ENCODE measurements at regions of chr1 and their contacts with region 1.

Region 1: DNA sequence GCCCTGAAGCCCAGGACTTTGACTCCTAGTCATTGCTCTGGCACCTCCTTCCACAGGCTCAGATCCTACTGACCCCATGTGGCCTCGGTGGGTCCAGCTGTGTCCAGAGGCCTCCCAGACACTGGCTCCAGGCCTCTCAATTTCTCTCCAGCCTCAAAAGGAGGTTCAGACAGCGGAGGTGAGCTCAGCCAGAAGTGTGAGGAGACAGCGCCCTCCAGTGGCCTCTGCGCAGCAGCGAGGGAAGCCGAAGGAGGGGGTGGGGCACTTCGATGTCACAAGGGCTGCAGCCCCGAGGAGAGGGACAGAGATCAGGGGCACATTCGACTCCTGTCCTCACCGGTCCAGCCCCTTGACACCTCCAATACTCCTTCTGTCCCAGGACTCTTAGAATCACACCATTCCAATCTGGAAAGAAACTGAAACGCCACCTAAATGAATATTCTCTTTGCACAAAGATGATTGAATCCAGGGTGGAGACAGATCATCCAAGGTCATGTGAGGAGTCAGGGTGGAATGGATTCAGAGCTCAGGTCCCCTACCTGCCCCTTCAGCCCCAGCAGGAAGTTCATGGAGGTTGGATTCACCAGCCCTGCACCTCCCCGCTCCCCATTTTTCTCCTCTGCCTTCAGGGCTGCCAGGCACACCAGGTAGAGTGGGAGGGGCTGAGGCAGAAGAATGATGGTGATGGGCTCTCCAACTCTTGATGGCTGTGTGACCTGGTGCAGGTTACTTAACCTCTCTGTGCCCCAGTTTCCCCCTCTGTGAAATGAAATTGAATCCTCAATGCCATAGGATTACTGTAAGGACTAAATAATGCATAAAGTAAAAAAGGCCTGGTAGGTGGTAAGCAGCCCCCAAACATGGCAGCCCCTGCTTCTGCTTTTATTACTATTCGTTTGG is 34.8 kb upstream of the ZBTB40 start:
- DNase-seq: peak; percentile 51 to 80
- H3K4me3 ChIP-seq: no peak overlapping the region
- H3K27ac ChIP-seq: no peak overlapping the region
- H3K4me1 ChIP-seq: peaks cover 29% of the 10 kb centered on the region
- H3K27me3 ChIP-seq: no peaks in the 10 kb centered on the region
- CTCF ChIP-seq: peak; percentile 92

Region 2: GRCh38 chr1:21368515-21369289 is 1048.1 kb before region 1 on chr1:
- CTCF ChIA-PET with region 1: interaction called, 5 read pairs
- POLR2A ChIA-PET with region 1: no interaction called
- intact Hi-C with region 1: loop called (anchors 5 kb)
- DNase-seq: peak; percentile 43 to 72
- H3K4me3 ChIP-seq: no peak overlapping the region
- H3K27ac ChIP-seq: no peak overlapping the region
- H3K4me1 ChIP-seq: no peaks in the 10 kb centered on the region; the same call in 1 of the 2 replicates
- H3K27me3 ChIP-seq: no peaks in the 10 kb centered on the region
- CTCF ChIP-seq: peak; percentile 96

Region 3: GRCh38 chr1:22025368-22026155 is 391.2 kb before region 1 on chr1:
- CTCF ChIA-PET with region 1: no interaction called
- POLR2A ChIA-PET with region 1: no interaction called
- intact Hi-C with region 1: loop called (anchors 10 kb)
- DNase-seq: peak; percentile 80 to 85
- H3K4me3 ChIP-seq: peak overlapping the region; percentile 87
- H3K27ac ChIP-seq: peak overlapping the region; percentile 87
- H3K4me1 ChIP-seq: peaks cover 4% of the 10 kb centered on the region
- H3K27me3 ChIP-seq: no peaks in the 10 kb centered on the region
- CTCF ChIP-seq: no peak

Region 4: DNA sequence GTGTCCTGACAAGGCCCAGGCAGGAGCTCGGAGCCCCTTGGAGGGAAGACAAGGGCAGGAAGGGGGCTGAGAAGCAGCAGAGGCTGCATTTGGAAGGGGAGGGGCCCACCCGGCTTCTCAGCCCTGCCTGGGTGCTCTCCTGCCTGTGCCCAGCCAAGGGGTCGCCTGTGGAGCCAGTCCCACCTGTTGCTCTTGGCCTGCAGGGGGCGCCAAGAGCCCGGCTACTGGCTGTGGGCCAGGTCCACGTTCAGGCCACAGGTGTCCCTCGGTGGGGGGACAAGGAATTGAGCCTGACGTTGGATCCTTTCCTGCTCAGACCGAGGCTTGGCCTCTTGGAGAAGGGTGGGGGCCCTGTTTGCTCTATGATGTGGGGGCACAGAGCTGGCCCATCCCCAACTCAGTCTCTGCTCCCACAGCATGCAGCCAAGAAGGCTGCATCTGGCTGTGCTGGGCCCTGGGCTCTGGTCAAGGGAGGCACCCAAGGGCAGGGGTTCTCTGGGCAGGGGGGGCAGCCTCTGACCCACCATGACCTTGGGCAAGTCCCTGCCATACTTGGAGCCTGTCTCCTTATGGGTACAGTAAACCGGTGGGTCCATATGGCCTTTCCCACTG is 284.8 kb before region 1 on chr1:
- CTCF ChIA-PET with region 1: interaction called, 6 read pairs
- POLR2A ChIA-PET with region 1: no interaction called
- intact Hi-C with region 1: loop called (anchors 1 kb)
- DNase-seq: peak in 1 of 2 experiments; percentile 68
- H3K4me3 ChIP-seq: no peak overlapping the region
- H3K27ac ChIP-seq: no peak overlapping the region
- H3K4me1 ChIP-seq: peaks cover 10% of the 10 kb centered on the region
- H3K27me3 ChIP-seq: no peaks in the 10 kb centered on the region
- CTCF ChIP-seq: peak; percentile 89

Region 5: DNA sequence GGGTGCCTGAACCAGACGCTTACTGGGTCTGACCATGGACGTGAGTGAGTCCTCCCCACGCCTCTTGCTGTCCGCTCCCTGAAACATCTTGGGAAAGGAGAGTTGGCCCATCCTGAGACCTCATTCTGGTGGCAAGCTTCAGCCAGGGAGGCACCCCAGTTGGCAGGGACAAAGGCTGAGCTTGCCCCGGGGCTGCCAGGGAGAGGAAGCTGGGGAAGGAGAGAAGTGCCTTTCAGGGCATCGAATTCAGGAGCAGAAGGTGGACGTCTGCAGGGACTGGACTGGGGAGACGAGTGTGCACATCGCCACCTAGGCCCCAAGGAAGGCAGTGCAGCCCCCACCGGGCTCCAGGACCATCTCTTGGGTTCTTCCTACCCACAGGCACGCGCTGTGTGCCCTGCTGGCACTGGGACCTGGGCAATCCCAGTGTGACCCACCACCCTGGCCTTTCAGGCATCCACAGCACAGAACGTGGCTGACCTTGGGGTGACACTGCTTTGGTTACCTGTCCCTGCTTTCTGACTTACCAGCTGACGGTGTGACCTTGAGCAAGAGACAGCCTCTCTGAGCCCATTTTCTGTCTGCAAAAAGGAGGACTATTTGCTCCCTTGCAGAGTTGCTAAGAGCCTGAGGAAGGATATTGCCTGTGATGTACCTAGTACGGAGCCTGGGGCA is 140.9 kb before region 1 on chr1:
- CTCF ChIA-PET with region 1: no interaction called
- POLR2A ChIA-PET with region 1: no interaction called
- intact Hi-C with region 1: loop called (anchors 10 kb)
- DNase-seq: peak; percentile 67
- H3K4me3 ChIP-seq: no peak overlapping the region
- H3K27ac ChIP-seq: peak overlapping the region; percentile 86
- H3K4me1 ChIP-seq: peaks cover 41% of the 10 kb centered on the region
- H3K27me3 ChIP-seq: no peaks in the 10 kb centered on the region
- CTCF ChIP-seq: peak; percentile 79

Region 6: GRCh38 chr1:22317226-22317919 is 99.4 kb before region 1 on chr1:
- CTCF ChIA-PET with region 1: no interaction called
- POLR2A ChIA-PET with region 1: no interaction called
- intact Hi-C with region 1: no loop called
- DNase-seq: peak in 1 of 2 experiments; percentile 21
- H3K4me3 ChIP-seq: no peak overlapping the region
- H3K27ac ChIP-seq: no peak overlapping the region
- H3K4me1 ChIP-seq: no peaks in the 10 kb centered on the region
- H3K27me3 ChIP-seq: no peaks in the 10 kb centered on the region
- CTCF ChIP-seq: peak; percentile 70

Region 7: DNA sequence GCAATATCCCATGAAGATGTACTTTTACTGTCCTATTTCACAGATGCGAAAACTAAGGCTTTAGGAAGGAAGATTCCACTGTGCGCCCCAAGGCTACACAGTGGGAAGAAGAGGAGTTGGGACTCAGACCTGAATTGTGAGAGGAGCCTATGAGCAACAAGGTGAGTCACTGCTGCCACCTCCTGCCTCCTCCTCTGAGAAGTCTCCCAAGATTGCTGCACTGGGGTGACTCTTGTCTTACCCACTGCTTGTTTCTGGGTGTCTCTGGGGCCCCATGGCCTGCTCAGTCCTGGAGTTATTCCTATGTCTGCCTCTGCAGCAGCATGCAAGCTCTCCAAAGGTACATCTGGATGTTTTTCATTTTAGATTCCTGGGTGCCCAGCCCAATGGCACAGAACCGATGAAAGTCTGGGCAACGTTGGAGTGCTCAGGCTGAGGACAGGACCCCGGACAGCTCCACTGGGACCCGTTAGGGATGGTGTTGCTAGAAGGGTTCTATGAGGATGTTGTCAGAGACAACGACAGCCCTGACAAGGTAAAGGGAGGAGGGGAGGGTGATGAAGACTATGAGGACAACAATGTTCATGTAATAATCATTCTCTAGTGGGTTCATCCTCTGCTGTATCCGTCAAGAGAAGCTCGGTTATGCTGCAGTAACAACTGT is 208.6 kb after region 1 on chr1:
- CTCF ChIA-PET with region 1: no interaction called
- POLR2A ChIA-PET with region 1: no interaction called
- intact Hi-C with region 1: no loop called
- DNase-seq: no peak
- H3K4me3 ChIP-seq: no peak overlapping the region
- H3K27ac ChIP-seq: no peak overlapping the region
- H3K4me1 ChIP-seq: no peaks in the 10 kb centered on the region
- H3K27me3 ChIP-seq: peaks cover 67% of the 10 kb centered on the region
- CTCF ChIP-seq: no peak

Region 8: GRCh38 chr1:22930235-22930912 is 513.6 kb after region 1 on chr1:
- CTCF ChIA-PET with region 1: interaction called, 3 read pairs
- POLR2A ChIA-PET with region 1: no interaction called
- intact Hi-C with region 1: loop called (anchors 2 kb)
- DNase-seq: peak in 1 of 2 experiments; percentile 60
- H3K4me3 ChIP-seq: no peak overlapping the region
- H3K27ac ChIP-seq: no peak overlapping the region
- H3K4me1 ChIP-seq: no peaks in the 10 kb centered on the region
- H3K27me3 ChIP-seq: no peaks in the 10 kb centered on the region
- CTCF ChIP-seq: peak; percentile 80

Measured in PC-9 (cell line).